AG04449 (cell line): ENCODE measurements at regions of chr2 and their contacts with region 1.

Region 1: GRCh38 chr2:197434541-197435513 is at the start of gene SF3B1:
- DNase-seq: peak; percentile 89
- H3K4me3 ChIP-seq: peak within 1 kb of the TSS; percentile 93
- CTCF ChIP-seq: no peak

Region 2: DNA sequence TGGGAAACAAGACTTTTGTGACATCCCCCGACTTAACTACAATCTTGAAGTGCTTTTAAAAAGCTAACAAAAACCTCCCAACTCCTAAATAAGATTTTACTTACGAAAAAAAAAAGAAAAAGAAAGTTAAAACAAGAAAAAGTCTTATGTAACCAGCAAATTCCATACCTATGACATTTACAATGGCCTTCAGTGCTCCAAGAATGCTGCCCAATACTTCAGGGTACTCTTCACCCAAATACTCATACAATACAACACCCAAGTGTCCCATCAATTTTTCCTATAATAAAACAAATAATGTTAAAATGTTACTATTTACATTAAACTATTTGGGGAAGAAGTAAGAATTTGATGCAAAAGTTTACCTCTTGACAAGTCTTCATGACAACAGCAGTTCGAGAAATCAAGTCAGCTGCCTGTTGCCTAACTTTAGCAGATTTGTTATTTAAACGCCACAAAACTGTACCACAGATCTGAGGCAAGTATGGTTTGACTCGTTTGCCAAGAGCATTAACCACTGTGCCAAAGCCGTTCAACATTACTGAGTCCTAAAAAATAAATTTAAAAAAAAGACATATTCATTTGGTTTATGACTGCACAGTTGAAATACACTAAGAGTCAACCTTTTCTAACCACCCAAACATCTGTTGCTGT is 34.8 kb before region 1 on chr2:
- CTCF ChIA-PET with region 1: no interaction called
- POLR2A ChIA-PET with region 1: no interaction called
- DNase-seq: no peak
- H3K4me3 ChIP-seq: no peak overlapping the region
- CTCF ChIP-seq: no peak

Region 3: DNA sequence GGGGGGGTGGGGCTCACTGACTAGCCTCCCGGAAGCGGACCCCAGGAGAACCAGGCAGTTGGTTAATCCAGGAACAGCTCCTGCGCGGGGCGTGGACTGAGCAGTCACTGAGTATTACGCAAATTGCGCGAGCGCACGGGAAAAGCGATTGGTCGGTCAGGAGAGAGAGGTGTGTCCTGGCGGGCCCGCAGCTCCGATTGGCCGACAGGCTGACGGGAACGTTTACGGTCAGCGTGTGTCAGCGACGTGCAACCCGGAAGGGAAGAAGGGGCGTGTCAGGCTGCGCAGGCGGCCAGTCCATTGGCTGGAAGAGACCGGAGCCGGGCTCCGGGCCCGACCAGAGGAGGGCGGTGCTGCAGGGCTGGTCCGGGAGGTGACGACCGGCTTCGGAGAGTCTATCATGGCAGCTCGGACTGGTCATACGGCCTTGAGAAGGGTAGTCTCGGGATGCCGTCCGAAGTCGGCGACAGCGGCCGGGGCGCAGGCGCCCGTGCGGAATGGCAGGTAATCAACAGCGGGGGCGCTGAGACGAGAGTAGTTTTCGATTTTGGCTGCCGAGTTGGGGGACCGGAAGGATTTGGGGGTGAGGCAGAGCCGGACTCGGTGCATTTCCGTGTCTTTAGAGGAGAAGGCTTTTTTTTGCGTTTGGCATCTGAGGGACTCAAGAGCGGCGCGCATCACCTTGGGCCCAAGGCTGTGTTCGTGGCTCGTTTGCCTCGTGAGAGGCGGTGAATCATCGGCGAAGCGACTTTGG is 18.5 kb after region 1 on chr2 and contains the start of gene COQ10B:
- CTCF ChIA-PET with region 1: interaction called, 4 read pairs
- POLR2A ChIA-PET with region 1: interaction called, 25 read pairs
- DNase-seq: peak; percentile 99
- H3K4me3 ChIP-seq: peak within 1 kb of the TSS; percentile 99
- CTCF ChIP-seq: peak; percentile 37